Left colon (tissue), 2 donors: ENCODE measurements at regions of chr4 and their contacts with region 1.

Region 1: DNA sequence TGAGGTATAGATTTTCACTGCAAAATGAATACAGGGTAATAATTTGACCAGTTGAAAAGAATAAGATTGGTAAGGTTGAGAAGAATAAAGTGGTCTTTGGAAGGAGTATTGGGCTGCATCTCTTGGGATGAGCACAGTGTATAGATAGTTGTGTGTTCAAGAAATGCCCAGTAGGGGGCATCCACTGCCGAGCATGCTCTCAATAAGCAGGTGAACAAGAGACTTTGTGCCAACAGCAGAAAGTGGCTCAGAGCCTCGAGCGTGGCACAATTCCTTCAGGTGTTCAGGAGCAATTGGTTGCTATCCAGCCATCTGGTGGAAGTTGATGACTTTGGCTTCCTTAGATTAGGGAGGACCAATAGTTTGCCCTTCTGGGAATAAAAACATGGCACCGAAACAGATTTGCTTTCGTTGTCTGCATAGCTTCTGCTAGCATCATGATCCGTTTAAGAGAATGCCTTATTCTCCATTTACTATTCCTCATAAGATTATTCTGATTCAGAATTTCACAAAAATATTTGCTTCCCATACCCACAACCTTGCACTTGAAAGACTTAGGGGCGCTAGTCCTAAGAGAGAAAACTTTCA is 258.1 kb upstream of the NEIL3 start:
- DNase-seq: peak in 1 of 2 donors; percentile 6
- ATAC-seq: peak; percentile 50

Region 2: DNA sequence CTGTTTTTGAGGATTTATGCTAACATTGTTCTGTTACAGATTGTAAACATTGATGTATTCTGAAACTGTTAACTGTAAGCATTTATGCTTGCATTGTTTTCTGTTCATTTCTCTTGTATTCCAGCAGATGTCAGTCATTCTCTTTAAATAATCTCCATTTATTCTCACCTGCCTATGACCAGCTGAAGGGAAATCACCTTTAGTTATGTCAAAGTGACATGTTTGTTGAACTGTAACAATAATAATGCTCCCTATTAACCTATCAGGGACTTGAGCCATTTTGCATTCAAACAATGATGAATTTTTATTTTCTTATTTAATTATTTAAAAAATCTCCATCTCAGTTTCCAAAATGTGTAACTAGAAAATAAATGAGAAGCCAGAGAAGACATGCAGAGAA is 673.8 kb before region 1 on chr4:
- intact Hi-C with region 1: loop called in 1 of 2 experiments (anchors 10 kb)
- DNase-seq: no peak
- ATAC-seq: no peak